AG04450 (cell line): ENCODE measurements at regions of chr18 and their contacts with region 1.

Region 1: GRCh38 chr18:5546660-5547059 is 2.9 kb upstream of the EPB41L3 start:
- DNase-seq: peak; percentile 23
- H3K4me3 ChIP-seq: no peak overlapping the region
- H3K27ac ChIP-seq: no peak overlapping the region
- H3K27me3 ChIP-seq: no peaks in the 10 kb centered on the region
- CTCF ChIP-seq: peak; percentile 75

Region 2: DNA sequence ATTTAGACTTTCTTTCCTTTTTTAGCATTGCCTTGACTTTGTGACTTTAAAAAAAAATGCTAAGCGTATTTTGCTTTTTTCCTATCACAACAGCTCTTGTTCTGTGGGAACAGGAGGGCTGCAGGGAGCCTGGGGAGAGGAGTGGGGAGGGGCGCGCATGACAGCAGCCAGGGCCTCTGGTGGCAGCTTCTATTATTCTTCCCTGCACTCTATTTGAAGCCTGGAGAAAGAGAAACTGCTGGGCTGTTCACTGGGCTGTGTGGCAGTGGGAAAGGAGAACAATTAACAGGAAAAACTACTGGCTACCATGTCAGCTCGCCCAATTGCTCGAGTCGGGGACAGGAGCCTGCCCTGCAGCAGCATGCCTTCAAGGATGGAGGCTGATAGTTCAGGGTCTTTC is 132.1 kb before region 1 on chr18:
- CTCF ChIA-PET with region 1: interaction called, 12 read pairs
- POLR2A ChIA-PET with region 1: no interaction called
- DNase-seq: no peak
- H3K4me3 ChIP-seq: no peak overlapping the region
- H3K27ac ChIP-seq: no peak overlapping the region
- H3K27me3 ChIP-seq: no peaks in the 10 kb centered on the region
- CTCF ChIP-seq: no peak

Region 3: GRCh38 chr18:5444269-5444668 is 102.4 kb before region 1 on chr18:
- CTCF ChIA-PET with region 1: interaction called, 12 read pairs
- POLR2A ChIA-PET with region 1: no interaction called
- DNase-seq: no peak
- H3K4me3 ChIP-seq: no peak overlapping the region
- H3K27ac ChIP-seq: no peak overlapping the region
- H3K27me3 ChIP-seq: no peaks in the 10 kb centered on the region
- CTCF ChIP-seq: no peak

Region 4: GRCh38 chr18:5508821-5509220 is 37.8 kb before region 1 on chr18:
- CTCF ChIA-PET with region 1: interaction called, 11 read pairs
- POLR2A ChIA-PET with region 1: interaction called, 11 read pairs
- DNase-seq: no peak
- H3K4me3 ChIP-seq: no peak overlapping the region
- H3K27ac ChIP-seq: no peak overlapping the region
- H3K27me3 ChIP-seq: no peaks in the 10 kb centered on the region
- CTCF ChIP-seq: no peak

Region 5: DNA sequence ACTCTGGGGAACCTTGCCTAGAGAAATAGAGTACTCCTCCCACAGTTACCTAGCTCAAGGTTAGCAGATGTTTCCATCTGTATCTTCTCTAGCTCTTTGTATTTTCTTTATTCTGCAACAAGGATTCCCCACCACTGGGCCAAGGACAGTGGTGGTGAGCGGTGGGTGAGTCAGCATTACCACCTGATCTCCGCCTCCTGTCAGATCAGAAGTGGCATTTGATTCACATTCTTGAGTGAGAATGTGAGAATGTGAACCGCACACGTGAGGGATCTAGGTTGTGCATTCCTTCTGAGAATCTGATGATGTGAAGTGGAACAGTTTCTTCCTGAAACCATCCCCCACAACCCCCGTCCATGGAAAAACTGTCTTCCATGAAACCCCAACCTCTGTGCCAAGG is 11.8 kb before region 1 on chr18:
- CTCF ChIA-PET with region 1: interaction called, 14 read pairs
- POLR2A ChIA-PET with region 1: no interaction called
- DNase-seq: no peak
- H3K4me3 ChIP-seq: no peak overlapping the region
- H3K27ac ChIP-seq: peak overlapping the region; percentile 3
- H3K27me3 ChIP-seq: no peaks in the 10 kb centered on the region
- CTCF ChIP-seq: no peak

Region 6: DNA sequence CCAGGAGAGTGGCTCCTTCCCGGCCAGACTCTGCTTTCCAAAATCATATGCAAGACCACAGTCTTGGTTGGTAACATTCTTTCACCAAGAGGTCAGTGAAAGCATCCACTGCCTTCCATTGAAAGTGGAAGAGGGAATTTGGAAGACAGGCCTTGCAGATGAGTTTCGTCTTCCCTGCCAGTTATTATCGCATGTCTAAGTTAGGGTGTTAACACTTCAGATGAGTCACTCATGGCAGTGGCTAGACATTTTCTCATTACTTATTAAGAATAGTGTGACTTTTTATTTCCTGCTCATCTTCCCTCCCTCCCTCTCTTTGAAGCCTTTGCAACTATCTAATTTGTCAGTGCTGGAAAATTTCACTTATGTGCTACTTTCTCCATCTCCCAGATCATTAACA is 100.1 kb after region 1 on chr18:
- CTCF ChIA-PET with region 1: no interaction called
- POLR2A ChIA-PET with region 1: no interaction called
- DNase-seq: no peak
- H3K4me3 ChIP-seq: no peak overlapping the region
- H3K27ac ChIP-seq: no peak overlapping the region
- H3K27me3 ChIP-seq: no peaks in the 10 kb centered on the region
- CTCF ChIP-seq: no peak